Caco-2 (cell line): ENCODE measurements at regions of chr6 and their contacts with region 1.

Region 1: GRCh38 chr6:69917834-69918233 is 51.5 kb downstream of the COL19A1 start:
- DNase-seq: no peak
- H3K4me3 ChIP-seq: no peak overlapping the region
- H3K4me3 Mint-ChIP-seq: no peak overlapping the region
- H3K27ac Mint-ChIP-seq: no peak overlapping the region
- H3K4me1 ChIP-seq: 0 out of 2 replicates have a peak, but pooled peaks cover 3% of the 10 kb centered on the region
- H3K4me1 Mint-ChIP-seq: no peaks in the 10 kb centered on the region
- H3K27me3 ChIP-seq: no peaks in the 10 kb centered on the region
- H3K27me3 Mint-ChIP-seq: no peaks in the 10 kb centered on the region
- CTCF ChIP-seq: no peak

Region 2: DNA sequence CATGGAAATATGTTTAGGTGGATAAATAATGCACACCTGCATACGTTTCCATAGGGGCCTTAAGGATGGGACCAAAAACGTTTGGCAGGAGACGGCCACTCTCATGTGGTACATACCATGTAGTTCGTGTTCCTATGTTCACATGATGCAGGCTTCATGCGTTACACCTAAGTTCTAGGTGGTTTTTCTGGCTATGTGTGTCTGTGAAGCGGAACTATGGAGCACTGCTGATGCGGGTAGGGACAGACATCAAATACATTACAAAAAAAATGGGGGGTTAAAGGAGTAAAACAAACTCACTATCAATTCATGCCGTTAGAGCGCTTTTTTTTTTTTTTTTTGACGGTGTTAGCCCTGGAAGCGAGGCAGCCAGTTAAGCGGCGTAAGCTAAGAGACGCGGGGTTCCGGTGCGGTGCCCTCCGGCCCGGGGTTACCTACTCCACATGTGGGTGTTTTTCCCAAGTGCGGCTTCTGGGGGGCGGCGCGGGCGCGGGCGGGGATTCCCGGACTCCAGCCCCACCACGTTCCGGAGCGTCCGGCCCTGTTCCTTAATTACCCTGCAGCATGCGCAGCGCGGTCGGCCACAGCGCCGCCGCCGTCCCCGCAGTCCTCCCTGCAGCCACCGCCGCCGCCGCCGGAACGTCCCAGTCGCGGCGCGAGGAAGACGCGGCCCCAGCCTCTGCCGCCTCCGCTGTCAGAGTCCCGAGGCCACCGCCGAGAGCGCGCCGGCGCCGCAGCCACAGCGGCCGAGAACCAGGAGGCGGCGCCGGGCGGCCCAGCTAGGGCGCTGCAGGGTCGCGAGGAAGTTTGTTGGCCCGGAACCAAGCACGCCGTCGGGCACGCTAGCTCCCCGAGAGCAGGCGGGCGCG is 50.8 kb before region 1 on chr6:
- CTCF ChIA-PET with region 1: no interaction called
- POLR2A ChIA-PET with region 1: interaction called, 12 read pairs
- intact Hi-C with region 1: no loop called
- DNase-seq: peak; percentile 47 to 78
- H3K4me3 ChIP-seq: peak overlapping the region; percentile 53
- H3K4me3 Mint-ChIP-seq: peak overlapping the region; percentile 81
- H3K27ac Mint-ChIP-seq: no peak overlapping the region
- H3K4me1 ChIP-seq: peaks cover 5% of the 10 kb centered on the region
- H3K4me1 Mint-ChIP-seq: peaks cover 4% of the 10 kb centered on the region
- H3K27me3 ChIP-seq: no peaks in the 10 kb centered on the region
- H3K27me3 Mint-ChIP-seq: peaks cover 7% of the 10 kb centered on the region
- CTCF ChIP-seq: peak in 1 of 2 experiments; percentile 15

Region 3: DNA sequence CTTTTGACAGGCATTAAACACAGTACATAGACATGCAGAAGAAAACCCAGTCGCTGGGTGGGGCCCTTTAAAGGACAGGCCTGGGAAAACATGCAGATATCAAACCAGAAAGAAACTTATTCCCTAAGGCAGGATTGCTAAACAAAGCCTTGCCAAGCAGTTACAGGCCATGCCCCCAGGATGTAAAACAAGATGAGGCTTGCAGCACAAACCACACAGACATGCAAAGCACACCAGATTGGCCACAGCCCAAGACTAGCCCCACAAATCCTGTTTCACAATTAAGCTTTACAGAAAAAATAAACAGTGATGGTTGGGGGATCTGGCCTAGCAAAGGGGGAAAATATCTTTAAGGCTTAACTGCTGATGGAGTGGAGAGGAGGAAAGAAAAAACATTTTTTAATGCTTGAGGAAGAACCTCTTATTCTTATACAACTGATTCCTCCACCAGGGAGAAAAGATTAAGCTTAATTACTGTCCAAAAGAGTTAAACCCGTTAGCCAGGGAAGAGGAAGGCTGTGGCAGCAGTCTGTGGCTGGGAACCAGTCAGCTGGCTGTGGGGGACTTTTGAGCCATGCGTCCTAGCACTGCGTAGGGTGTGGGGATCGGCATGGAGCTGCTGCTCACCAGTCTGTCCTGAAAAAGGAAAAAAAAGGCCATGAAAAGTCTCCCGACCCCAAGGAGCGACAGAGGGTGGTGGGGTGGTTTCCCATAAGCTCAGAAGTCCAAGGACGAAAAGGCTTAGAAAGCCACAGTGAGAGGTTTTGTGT is 23.1 kb before region 1 on chr6:
- CTCF ChIA-PET with region 1: no interaction called
- POLR2A ChIA-PET with region 1: no interaction called
- intact Hi-C with region 1: loop called (anchors 2 kb)
- DNase-seq: no peak
- H3K4me3 ChIP-seq: no peak overlapping the region
- H3K4me3 Mint-ChIP-seq: no peak overlapping the region
- H3K27ac Mint-ChIP-seq: peak overlapping the region; percentile 42
- H3K4me1 ChIP-seq: peaks cover 26% of the 10 kb centered on the region
- H3K4me1 Mint-ChIP-seq: peaks cover 7% of the 10 kb centered on the region
- H3K27me3 ChIP-seq: no peaks in the 10 kb centered on the region
- H3K27me3 Mint-ChIP-seq: no peaks in the 10 kb centered on the region
- CTCF ChIP-seq: no peak

Region 4: DNA sequence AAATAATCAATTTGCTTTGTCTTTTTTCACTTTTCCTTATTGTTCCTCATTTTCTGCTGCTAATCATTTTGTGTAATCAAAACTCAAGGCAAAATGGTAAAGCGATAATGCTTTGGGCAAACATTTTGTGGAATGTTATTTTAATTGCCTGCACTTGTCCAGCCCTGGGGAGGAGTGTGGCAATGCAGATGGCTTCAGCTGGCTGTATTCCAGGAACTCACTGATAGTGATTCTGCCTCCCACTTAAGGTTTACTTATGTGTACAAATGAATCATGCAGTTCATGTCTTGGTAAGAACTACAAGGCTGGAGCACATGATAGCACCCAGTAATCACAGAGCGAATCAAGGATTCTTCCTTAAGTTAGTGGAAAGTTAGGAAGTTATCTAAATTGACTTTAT is 56.4 kb after region 1 on chr6:
- CTCF ChIA-PET with region 1: no interaction called
- POLR2A ChIA-PET with region 1: no interaction called
- intact Hi-C with region 1: no loop called
- DNase-seq: no peak
- H3K4me3 ChIP-seq: no peak overlapping the region
- H3K4me3 Mint-ChIP-seq: no peak overlapping the region
- H3K27ac Mint-ChIP-seq: no peak overlapping the region
- H3K4me1 ChIP-seq: no peaks in the 10 kb centered on the region
- H3K4me1 Mint-ChIP-seq: no peaks in the 10 kb centered on the region
- H3K27me3 ChIP-seq: no peaks in the 10 kb centered on the region
- H3K27me3 Mint-ChIP-seq: peaks cover 6% of the 10 kb centered on the region
- CTCF ChIP-seq: no peak